CD4-positive, alpha-beta T cell (primary cell): ENCODE measurements at regions of chr14 and their contacts with region 1.

Region 1: DNA sequence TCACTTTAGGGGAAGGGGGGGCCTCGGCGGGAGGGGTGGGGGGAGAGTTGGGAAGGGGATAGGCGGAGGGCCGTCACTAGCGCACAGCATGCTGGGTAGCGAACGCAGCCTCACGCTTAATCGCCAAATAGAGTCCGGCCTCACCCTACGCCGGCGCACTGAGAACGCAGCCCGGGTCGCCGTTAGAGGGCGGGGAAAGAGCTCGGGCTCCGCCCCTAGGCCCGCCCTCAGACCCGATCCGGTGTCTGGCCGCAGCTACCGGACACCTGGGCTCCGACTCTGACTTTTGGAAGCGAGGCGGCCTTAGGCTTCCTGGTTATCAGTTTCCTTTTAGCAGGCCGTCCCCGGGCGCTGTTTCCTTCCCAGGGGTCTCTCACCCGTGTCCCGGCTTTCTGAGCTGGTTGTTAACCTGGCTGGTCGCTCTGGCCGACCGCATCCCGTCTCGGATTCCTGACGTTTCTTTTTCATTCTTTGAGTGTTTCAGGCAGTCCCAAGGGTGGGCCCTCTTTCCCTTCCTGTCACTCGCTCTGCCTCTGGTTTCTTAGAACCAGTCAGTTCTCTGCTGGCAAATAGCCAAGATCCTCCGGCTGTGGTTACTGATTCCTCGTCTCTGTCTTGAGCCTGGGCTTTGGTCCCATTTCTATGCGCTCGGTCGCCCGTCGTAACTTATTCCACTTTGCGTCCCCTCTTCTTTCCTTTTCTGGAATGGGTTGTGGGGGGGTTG is 378 bp upstream of the STRN3 start:
- DNase-seq: peak; percentile 75 to 96 (median 87)
- ATAC-seq: peak; percentile 85
- H3K4me3 ChIP-seq: peak overlapping the region; percentile 99
- H3K4me3 Mint-ChIP-seq: peak overlapping the region; percentile 98
- H3K27ac ChIP-seq: peak overlapping the region; percentile 87 to 90
- H3K27ac Mint-ChIP-seq: peak overlapping the region; percentile 94
- H3K4me1 ChIP-seq: peaks cover 10% of the 10 kb centered on the region
- H3K4me1 Mint-ChIP-seq: peaks cover 62% of the 10 kb centered on the region
- H3K27me3 ChIP-seq: no peaks in the 10 kb centered on the region
- H3K27me3 Mint-ChIP-seq: no peaks in the 10 kb centered on the region
- CTCF ChIP-seq: no peak

Region 2: GRCh38 chr14:30558675-30559555 is 467.6 kb before region 1 on chr14 and contains the start of gene G2E3:
- CTCF ChIA-PET with region 1: no interaction called
- POLR2A ChIA-PET with region 1: interaction called, 4 read pairs
- intact Hi-C with region 1: loop called in 1 of 2 experiments (anchors 5 kb)
- DNase-seq: peak; percentile 71 to 93 (median 84)
- ATAC-seq: peak; percentile 98
- H3K4me3 ChIP-seq: peak within 1 kb of the TSS; percentile 88
- H3K4me3 Mint-ChIP-seq: peak within 1 kb of the TSS; percentile 100
- H3K27ac ChIP-seq: peak within 1 kb of the TSS; percentile 73 to 83
- H3K27ac Mint-ChIP-seq: peak within 1 kb of the TSS; percentile 96
- H3K4me1 ChIP-seq: peaks cover 20% of the 10 kb centered on the region
- H3K4me1 Mint-ChIP-seq: peaks cover 46% of the 10 kb centered on the region
- H3K27me3 ChIP-seq: no peaks in the 10 kb centered on the region
- H3K27me3 Mint-ChIP-seq: no peaks in the 10 kb centered on the region
- CTCF ChIP-seq: no peak
- total RNA-seq, gene G2E3: 23.8 to 24.3 TPM

Region 3: GRCh38 chr14:30974628-30975027 is 51.9 kb before region 1 on chr14:
- CTCF ChIA-PET with region 1: no interaction called
- POLR2A ChIA-PET with region 1: interaction called, 3 read pairs
- intact Hi-C with region 1: loop called in 1 of 2 experiments (anchors 5 kb)
- DNase-seq: no peak
- ATAC-seq: no peak
- H3K4me3 ChIP-seq: no peak overlapping the region
- H3K4me3 Mint-ChIP-seq: no peak overlapping the region
- H3K27ac ChIP-seq: no peak overlapping the region
- H3K27ac Mint-ChIP-seq: no peak overlapping the region
- H3K4me1 ChIP-seq: peaks cover 11% of the 10 kb centered on the region
- H3K4me1 Mint-ChIP-seq: peaks cover 70% of the 10 kb centered on the region
- H3K27me3 ChIP-seq: no peaks in the 10 kb centered on the region
- H3K27me3 Mint-ChIP-seq: no peaks in the 10 kb centered on the region
- CTCF ChIP-seq: no peak

Region 4: DNA sequence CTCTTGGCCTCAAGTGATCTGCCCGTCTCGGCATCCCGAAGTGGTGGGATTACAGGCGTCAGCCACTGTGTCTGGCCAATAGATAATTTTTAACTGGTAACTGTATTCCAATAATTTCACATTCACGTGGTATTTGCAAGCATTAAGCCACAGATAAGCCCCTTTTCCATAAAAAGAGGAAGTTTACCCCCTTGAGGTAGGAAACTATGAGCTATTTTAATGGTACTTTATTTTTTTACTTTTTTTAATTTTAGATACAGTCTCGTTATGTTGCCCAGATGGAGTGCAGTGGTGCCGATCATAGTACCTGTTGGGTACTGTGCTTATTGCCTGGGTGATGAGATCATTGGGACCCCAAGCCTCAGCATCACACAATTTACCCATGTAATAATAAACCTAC is 44.0 kb before region 1 on chr14:
- CTCF ChIA-PET with region 1: interaction called, 5 read pairs
- POLR2A ChIA-PET with region 1: interaction called, 4 read pairs
- intact Hi-C with region 1: loop called (anchors 5 kb)
- DNase-seq: no peak
- ATAC-seq: no peak
- H3K4me3 ChIP-seq: no peak overlapping the region
- H3K4me3 Mint-ChIP-seq: no peak overlapping the region
- H3K27ac ChIP-seq: no peak overlapping the region
- H3K27ac Mint-ChIP-seq: no peak overlapping the region
- H3K4me1 ChIP-seq: peaks cover 4% of the 10 kb centered on the region
- H3K4me1 Mint-ChIP-seq: peaks cover 25% of the 10 kb centered on the region
- H3K27me3 ChIP-seq: no peaks in the 10 kb centered on the region
- H3K27me3 Mint-ChIP-seq: no peaks in the 10 kb centered on the region
- CTCF ChIP-seq: no peak

Region 5: DNA sequence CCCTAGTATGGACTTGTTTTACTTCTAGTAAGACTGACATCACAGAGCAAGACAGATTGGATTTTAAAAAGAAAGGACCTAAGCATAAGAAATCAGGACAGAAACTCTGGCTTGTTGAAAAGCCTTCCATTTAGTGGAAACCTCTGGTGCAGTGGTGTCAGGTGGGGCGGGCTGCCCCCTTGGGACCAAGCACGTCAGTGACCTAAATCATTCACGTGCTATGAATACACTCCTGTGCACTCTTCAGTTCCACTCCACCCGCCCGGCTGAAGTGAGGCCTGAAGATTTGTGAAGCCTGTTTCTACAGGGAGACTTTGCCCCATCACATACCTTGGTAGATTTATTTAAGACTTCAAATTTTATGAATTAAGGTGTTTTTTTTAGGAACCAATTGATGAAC is 57.8 kb after region 1 on chr14:
- CTCF ChIA-PET with region 1: interaction called, 3 read pairs
- POLR2A ChIA-PET with region 1: no interaction called
- intact Hi-C with region 1: loop called (anchors 5 to 10 kb)
- DNase-seq: no peak
- ATAC-seq: no peak
- H3K4me3 ChIP-seq: no peak overlapping the region
- H3K4me3 Mint-ChIP-seq: no peak overlapping the region
- H3K27ac ChIP-seq: no peak overlapping the region
- H3K27ac Mint-ChIP-seq: no peak overlapping the region
- H3K4me1 ChIP-seq: no peaks in the 10 kb centered on the region
- H3K4me1 Mint-ChIP-seq: no peaks in the 10 kb centered on the region
- H3K27me3 ChIP-seq: no peaks in the 10 kb centered on the region
- H3K27me3 Mint-ChIP-seq: no peaks in the 10 kb centered on the region
- CTCF ChIP-seq: no peak

Region 6: GRCh38 chr14:31420319-31421111 is 394.0 kb after region 1 on chr14 and contains the start of gene HEATR5A:
- CTCF ChIA-PET with region 1: no interaction called
- POLR2A ChIA-PET with region 1: interaction called, 18 read pairs
- intact Hi-C with region 1: loop called in 1 of 2 experiments (anchors 5 kb)
- DNase-seq: peak; percentile 83 to 96 (median 93)
- ATAC-seq: peak; percentile 96
- H3K4me3 ChIP-seq: peak within 1 kb of the TSS; percentile 99
- H3K4me3 Mint-ChIP-seq: peak within 1 kb of the TSS; percentile 99
- H3K27ac ChIP-seq: peak within 1 kb of the TSS in 1 of 2 donors; percentile 64
- H3K27ac Mint-ChIP-seq: peak within 1 kb of the TSS; percentile 89
- H3K4me1 ChIP-seq: peaks cover 4% of the 10 kb centered on the region
- H3K4me1 Mint-ChIP-seq: peaks cover 33% of the 10 kb centered on the region
- H3K27me3 ChIP-seq: no peaks in the 10 kb centered on the region
- H3K27me3 Mint-ChIP-seq: no peaks in the 10 kb centered on the region
- CTCF ChIP-seq: peak; percentile 29
- total RNA-seq, gene HEATR5A: 5.2 to 5.5 TPM

Region 7: GRCh38 chr14:31561155-31561846 is 534.7 kb after region 1 on chr14 and contains the start of gene NUBPL:
- CTCF ChIA-PET with region 1: no interaction called
- POLR2A ChIA-PET with region 1: no interaction called
- intact Hi-C with region 1: loop called in 1 of 2 experiments (anchors 10 kb)
- DNase-seq: peak; percentile 94 to 99 (median 97)
- ATAC-seq: peak; percentile 91
- H3K4me3 ChIP-seq: peak within 1 kb of the TSS; percentile 84
- H3K4me3 Mint-ChIP-seq: peak within 1 kb of the TSS; percentile 95
- H3K27ac ChIP-seq: peak within 1 kb of the TSS; percentile 80 to 84
- H3K27ac Mint-ChIP-seq: peak within 1 kb of the TSS; percentile 98
- H3K4me1 ChIP-seq: no peaks in the 10 kb centered on the region
- H3K4me1 Mint-ChIP-seq: peaks cover 34% of the 10 kb centered on the region
- H3K27me3 ChIP-seq: no peaks in the 10 kb centered on the region
- H3K27me3 Mint-ChIP-seq: peaks cover 26% of the 10 kb centered on the region
- CTCF ChIP-seq: no peak
- total RNA-seq, gene NUBPL: 7.2 to 8.2 TPM